Caco-2 (cell line): ENCODE measurements at regions of chr20 and their contacts with region 1.

Region 1: GRCh38 chr20:46324960-46325703 is 16.8 kb upstream of the CDH22 start:
- DNase-seq: peak in 1 of 2 experiments; percentile 74
- H3K4me3 ChIP-seq: no peak overlapping the region
- H3K4me3 Mint-ChIP-seq: no peak overlapping the region
- H3K27ac Mint-ChIP-seq: no peak overlapping the region
- H3K4me1 ChIP-seq: no peaks in the 10 kb centered on the region
- H3K4me1 Mint-ChIP-seq: no peaks in the 10 kb centered on the region
- H3K27me3 ChIP-seq: peaks cover 3% of the 10 kb centered on the region; the same call in 1 of the 2 replicates
- H3K27me3 Mint-ChIP-seq: peaks cover 18% of the 10 kb centered on the region
- CTCF ChIP-seq: peak; percentile 61 to 71

Region 2: GRCh38 chr20:46243707-46244628 is 81.2 kb before region 1 on chr20:
- CTCF ChIA-PET with region 1: no interaction called
- POLR2A ChIA-PET with region 1: no interaction called
- intact Hi-C with region 1: no loop called
- DNase-seq: no peak
- H3K4me3 ChIP-seq: no peak overlapping the region
- H3K4me3 Mint-ChIP-seq: no peak overlapping the region
- H3K27ac Mint-ChIP-seq: no peak overlapping the region
- H3K4me1 ChIP-seq: no peaks in the 10 kb centered on the region
- H3K4me1 Mint-ChIP-seq: no peaks in the 10 kb centered on the region
- H3K27me3 ChIP-seq: no peaks in the 10 kb centered on the region; the same call in 1 of the 2 replicates
- H3K27me3 Mint-ChIP-seq: peaks cover 25% of the 10 kb centered on the region
- CTCF ChIP-seq: no peak

Region 3: GRCh38 chr20:46343348-46343974 is 18.3 kb after region 1 on chr20:
- CTCF ChIA-PET with region 1: interaction called, 7 read pairs
- POLR2A ChIA-PET with region 1: no interaction called
- intact Hi-C with region 1: loop called (anchors 2 kb)
- DNase-seq: no peak
- H3K4me3 ChIP-seq: no peak overlapping the region
- H3K4me3 Mint-ChIP-seq: no peak overlapping the region
- H3K27ac Mint-ChIP-seq: no peak overlapping the region
- H3K4me1 ChIP-seq: no peaks in the 10 kb centered on the region
- H3K4me1 Mint-ChIP-seq: no peaks in the 10 kb centered on the region
- H3K27me3 ChIP-seq: peaks cover 7% of the 10 kb centered on the region
- H3K27me3 Mint-ChIP-seq: peaks cover 15% of the 10 kb centered on the region
- CTCF ChIP-seq: no peak

Region 4: GRCh38 chr20:46357030-46357514 is 31.9 kb after region 1 on chr20:
- CTCF ChIA-PET with region 1: no interaction called
- POLR2A ChIA-PET with region 1: no interaction called
- intact Hi-C with region 1: no loop called
- DNase-seq: no peak
- H3K4me3 ChIP-seq: no peak overlapping the region
- H3K4me3 Mint-ChIP-seq: no peak overlapping the region
- H3K27ac Mint-ChIP-seq: no peak overlapping the region
- H3K4me1 ChIP-seq: peaks cover 42% of the 10 kb centered on the region
- H3K4me1 Mint-ChIP-seq: peaks cover 28% of the 10 kb centered on the region
- H3K27me3 ChIP-seq: no peaks in the 10 kb centered on the region
- H3K27me3 Mint-ChIP-seq: no peaks in the 10 kb centered on the region
- CTCF ChIP-seq: no peak

Region 5: DNA sequence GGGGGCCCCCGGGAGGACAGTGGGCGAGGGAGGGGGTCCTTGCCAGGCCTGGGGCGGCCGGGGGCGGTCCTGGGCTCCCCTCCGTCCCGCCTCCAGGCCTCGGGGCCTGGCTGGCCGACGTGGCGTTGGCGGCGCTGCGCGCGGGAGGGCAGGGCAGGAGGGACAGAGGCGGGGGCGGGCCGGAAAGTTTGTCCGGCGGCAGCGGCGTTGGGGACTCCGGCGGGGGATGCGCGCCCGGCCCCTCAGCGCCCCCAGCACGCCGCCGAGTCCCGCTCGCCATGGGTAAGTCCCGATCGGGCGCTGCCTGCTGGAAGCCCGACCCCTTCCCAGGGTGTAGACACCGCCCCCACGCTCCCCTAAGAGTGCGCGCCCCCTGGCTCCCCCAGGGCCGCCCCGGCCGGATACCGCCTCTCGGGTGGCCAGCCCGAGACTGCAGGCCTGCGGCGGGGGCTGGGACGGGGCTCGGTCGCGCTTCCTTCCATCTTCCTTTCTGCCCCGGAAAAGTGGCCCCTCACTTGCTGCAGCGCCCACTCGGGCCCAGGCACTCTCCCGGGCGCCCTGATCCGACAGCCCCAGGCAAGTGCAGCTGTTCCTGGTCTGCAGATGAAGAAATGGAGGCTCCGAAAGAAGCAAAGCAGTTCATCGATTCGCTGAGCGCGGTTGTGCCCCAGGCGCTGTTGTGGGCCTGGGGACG is 384.5 kb after region 1 on chr20 and contains the start of gene SLC2A10:
- CTCF ChIA-PET with region 1: no interaction called
- POLR2A ChIA-PET with region 1: no interaction called
- intact Hi-C with region 1: no loop called
- DNase-seq: peak; percentile 77 to 81
- H3K4me3 ChIP-seq: peak within 1 kb of the TSS; percentile 69
- H3K4me3 Mint-ChIP-seq: peak within 1 kb of the TSS; percentile 79
- H3K27ac Mint-ChIP-seq: peak within 1 kb of the TSS; percentile 72
- H3K4me1 ChIP-seq: peaks cover 16% of the 10 kb centered on the region
- H3K4me1 Mint-ChIP-seq: peaks cover 21% of the 10 kb centered on the region
- H3K27me3 ChIP-seq: no peaks in the 10 kb centered on the region
- H3K27me3 Mint-ChIP-seq: no peaks in the 10 kb centered on the region
- CTCF ChIP-seq: peak in 1 of 2 experiments; percentile 33
- total RNA-seq, gene SLC2A10: 4.2 and 4.3 TPM in 2 replicates

Region 6: DNA sequence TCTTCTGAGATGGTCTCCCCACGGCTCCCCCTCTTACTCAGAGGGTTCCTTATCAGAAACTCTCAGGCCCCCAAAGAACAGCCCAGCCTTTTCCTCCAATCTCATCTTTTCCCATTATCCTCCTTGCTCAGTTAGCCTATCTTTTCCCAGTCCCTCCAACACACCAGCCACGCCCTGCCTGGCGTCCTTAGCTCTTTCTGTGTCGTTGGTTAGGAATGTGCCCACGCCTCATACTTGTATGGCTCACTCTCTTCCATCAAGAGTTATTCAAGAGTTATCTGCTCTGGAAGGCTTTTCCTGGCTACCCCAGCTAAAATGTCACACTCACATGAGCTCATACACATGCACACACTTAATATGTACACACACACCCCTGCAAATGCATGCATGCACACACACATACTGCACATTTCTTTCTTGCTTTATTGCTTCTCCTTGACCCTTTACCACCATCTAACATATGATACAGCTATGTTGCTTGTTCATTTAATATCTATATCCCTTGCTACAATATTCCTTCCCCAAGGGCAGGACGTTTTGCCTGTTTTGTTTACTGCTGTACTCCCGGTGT is 421.9 kb after region 1 on chr20:
- CTCF ChIA-PET with region 1: no interaction called
- POLR2A ChIA-PET with region 1: no interaction called
- intact Hi-C with region 1: no loop called
- DNase-seq: no peak
- H3K4me3 ChIP-seq: no peak overlapping the region
- H3K4me3 Mint-ChIP-seq: no peak overlapping the region
- H3K27ac Mint-ChIP-seq: no peak overlapping the region
- H3K4me1 ChIP-seq: peaks cover 11% of the 10 kb centered on the region; the same call in 1 of the 2 replicates
- H3K4me1 Mint-ChIP-seq: peaks cover 10% of the 10 kb centered on the region
- H3K27me3 ChIP-seq: no peaks in the 10 kb centered on the region; the same call in 1 of the 2 replicates
- H3K27me3 Mint-ChIP-seq: peaks cover 33% of the 10 kb centered on the region
- CTCF ChIP-seq: no peak